ENCODE measurements at regions of chr9 and their contacts with region 1.

Region 1: GRCh38 chr9:130946778-130947617 is 8.0 kb upstream of the FIBCD1 start:
- DNase-seq: no peak
- H3K4me3 ChIP-seq: no peak overlapping the region
- H3K27ac ChIP-seq: no peak overlapping the region
- H3K4me1 ChIP-seq: no peaks in the 10 kb centered on the region
- H3K27me3 ChIP-seq: no peaks in the 10 kb centered on the region
- CTCF ChIP-seq: no peak
- POLR2A ChIP-seq: no peak

Region 2: GRCh38 chr9:130884980-130885696 is 61.9 kb before region 1 on chr9:
- intact Hi-C with region 1: loop called (anchors 5 kb)
- DNase-seq: no peak
- H3K4me3 ChIP-seq: no peak overlapping the region
- H3K27ac ChIP-seq: no peak overlapping the region
- H3K4me1 ChIP-seq: no peaks in the 10 kb centered on the region
- H3K27me3 ChIP-seq: no peaks in the 10 kb centered on the region
- CTCF ChIP-seq: no peak
- POLR2A ChIP-seq: no peak

Region 3: DNA sequence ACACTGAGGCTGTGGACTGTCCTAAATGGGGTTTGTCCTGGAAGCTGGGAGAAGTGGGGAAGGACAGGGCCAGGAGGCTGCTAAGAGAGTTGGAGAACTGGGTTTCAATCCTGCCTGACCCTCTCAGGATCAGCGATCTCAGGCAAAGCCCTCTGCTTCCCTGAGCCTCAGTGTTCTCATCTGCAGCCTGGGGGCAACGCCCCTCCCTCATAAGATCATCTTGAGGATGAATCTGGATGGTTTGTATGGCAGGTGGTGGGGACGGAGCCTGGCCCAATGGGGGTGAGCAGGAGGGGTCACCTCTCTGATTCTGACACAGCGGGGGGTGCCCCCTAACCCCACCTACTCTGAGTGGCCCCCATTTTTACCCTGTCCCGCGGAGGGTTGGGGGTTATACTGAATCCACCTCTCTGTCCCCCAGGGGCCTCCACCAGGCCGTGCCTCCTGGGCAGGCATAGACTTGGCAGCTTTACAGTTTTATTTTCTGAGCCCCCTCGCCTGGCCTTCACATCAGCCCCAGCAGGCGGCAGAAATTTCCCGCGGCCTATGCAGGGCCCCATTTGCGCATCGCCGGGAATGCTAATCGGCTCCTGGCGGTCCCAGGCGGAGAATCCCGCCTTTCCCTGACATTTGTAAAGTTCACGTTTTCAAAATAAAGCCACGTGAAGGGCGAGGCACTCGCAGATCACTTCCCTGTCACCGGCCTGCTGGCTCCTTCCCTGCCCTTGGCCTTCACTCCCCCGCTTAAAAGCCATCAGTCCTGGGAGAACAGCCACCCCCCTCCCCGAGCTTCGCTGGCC is 44.2 kb after region 1 on chr9:
- intact Hi-C with region 1: no loop called
- DNase-seq: no peak
- H3K4me3 ChIP-seq: no peak overlapping the region
- H3K27ac ChIP-seq: no peak overlapping the region
- H3K4me1 ChIP-seq: no peaks in the 10 kb centered on the region
- H3K27me3 ChIP-seq: no peaks in the 10 kb centered on the region
- CTCF ChIP-seq: no peak
- POLR2A ChIP-seq: no peak

Region 4: GRCh38 chr9:131008909-131009618 is 62.1 kb after region 1 on chr9 and contains the start of gene LAMC3:
- intact Hi-C with region 1: no loop called
- DNase-seq: no peak
- H3K4me3 ChIP-seq: no peak within 1 kb of the TSS
- H3K27ac ChIP-seq: no peak within 1 kb of the TSS
- H3K4me1 ChIP-seq: peaks cover 0 to 7% of the 10 kb centered on the region in 2 donors
- H3K27me3 ChIP-seq: no peaks in the 10 kb centered on the region
- CTCF ChIP-seq: peak in 2 of 6 experiments; percentile 23 to 46
- POLR2A ChIP-seq: no peak
- total RNA-seq, gene LAMC3: 0.81 to 11.1 (median 3.2) TPM

Region 5: GRCh38 chr9:131024978-131025868 is 78.2 kb after region 1 on chr9:
- intact Hi-C with region 1: no loop called
- DNase-seq: no peak
- H3K4me3 ChIP-seq: no peak overlapping the region
- H3K27ac ChIP-seq: no peak overlapping the region
- H3K4me1 ChIP-seq: no peaks in the 10 kb centered on the region
- H3K27me3 ChIP-seq: no peaks in the 10 kb centered on the region
- CTCF ChIP-seq: no peak
- POLR2A ChIP-seq: no peak